Calu3 (cell line): ENCODE measurements at regions of chr5 and their contacts with region 1.

Region 1: GRCh38 chr5:134586866-134587524 is 45.6 kb downstream of the SAR1B start:
- DNase-seq: peak; percentile 97
- H3K4me3 Mint-ChIP-seq: peak overlapping the region; percentile 26
- H3K27ac Mint-ChIP-seq: no peak overlapping the region
- H3K4me1 Mint-ChIP-seq: peaks cover 29% of the 10 kb centered on the region
- H3K27me3 Mint-ChIP-seq: no peaks in the 10 kb centered on the region
- CTCF ChIP-seq: peak; percentile 90

Region 2: DNA sequence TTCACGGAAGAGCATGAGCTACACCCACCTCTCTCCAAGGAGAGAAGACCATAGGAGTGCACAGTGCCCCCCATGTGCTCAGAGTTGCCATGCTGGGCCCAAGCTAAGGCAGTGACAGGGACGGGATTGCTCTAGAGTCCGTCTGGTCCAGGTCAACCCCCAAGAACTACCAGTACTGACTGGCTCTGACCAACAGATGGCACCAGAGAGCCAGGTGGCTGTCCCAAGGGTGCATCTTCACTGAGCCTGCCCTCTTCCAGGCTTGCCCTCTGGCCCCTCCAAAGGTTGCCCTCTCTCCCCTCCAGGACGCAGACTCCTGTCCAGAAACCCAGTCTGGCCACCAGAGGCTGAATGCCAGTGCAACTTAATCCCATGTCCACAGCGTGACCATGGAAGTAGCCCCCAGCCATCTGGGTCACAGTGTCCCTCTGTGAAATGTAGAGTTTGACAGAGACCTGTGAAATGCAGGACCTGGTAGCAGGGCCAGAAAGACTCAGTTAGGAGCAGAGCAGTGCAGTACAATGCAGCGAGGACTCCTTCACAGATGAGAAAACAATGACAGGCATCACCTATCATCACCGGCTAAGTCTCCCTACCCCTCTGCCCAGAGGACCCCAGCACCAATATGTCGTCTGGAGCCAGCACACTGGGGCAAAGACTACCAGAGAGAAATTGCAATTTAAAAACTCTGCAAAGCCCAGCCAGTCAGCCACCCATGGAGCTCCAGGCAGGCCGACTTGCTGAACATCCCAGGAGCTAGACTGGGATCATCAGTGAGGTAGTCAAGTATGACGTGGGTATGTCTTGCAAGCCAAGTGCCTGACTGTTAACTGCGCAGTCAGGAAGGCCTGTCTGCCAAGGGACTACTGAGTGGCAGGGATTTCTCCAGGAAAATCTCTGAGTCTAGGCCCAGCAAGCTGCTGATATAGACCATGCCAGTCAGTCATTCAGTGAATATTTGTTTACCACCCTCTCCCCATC is 402.6 kb before region 1 on chr5:
- CTCF ChIA-PET with region 1: interaction called, 6 read pairs
- intact Hi-C with region 1: loop called (anchors 2 kb)
- DNase-seq: peak; percentile 87
- H3K4me3 Mint-ChIP-seq: no peak overlapping the region
- H3K27ac Mint-ChIP-seq: no peak overlapping the region
- H3K4me1 Mint-ChIP-seq: peaks cover 22% of the 10 kb centered on the region
- H3K27me3 Mint-ChIP-seq: no peaks in the 10 kb centered on the region
- CTCF ChIP-seq: peak; percentile 95

Region 3: DNA sequence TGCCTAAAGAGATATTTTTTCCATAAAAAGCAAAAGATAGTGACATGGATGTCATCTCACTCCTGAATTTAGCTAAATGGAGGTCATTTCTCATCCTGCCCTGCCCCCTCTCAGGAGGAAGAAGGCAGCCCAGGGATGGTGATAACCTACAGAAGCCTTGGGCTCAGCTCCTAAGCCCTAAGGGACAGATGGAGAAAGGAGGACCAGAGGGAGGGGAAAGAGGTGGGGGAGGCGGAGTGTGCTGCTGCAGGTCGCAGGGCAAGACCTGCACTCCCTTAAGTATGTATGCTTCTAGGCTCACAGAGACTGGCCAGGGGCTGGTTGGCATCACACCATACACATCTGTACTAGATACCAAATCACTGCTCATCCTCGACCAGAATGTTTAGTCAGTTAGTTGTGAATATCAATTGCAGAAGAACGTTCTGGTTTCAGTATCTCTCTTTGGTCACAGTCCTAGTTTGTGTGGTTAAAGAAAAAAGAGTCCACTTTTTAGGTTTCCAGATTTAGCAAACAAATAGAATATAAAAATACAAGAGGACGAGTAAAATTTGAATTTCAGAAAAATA is 156.9 kb before region 1 on chr5:
- CTCF ChIA-PET with region 1: no interaction called
- intact Hi-C with region 1: no loop called
- DNase-seq: no peak
- H3K4me3 Mint-ChIP-seq: no peak overlapping the region
- H3K27ac Mint-ChIP-seq: no peak overlapping the region
- H3K4me1 Mint-ChIP-seq: peaks cover 10% of the 10 kb centered on the region
- H3K27me3 Mint-ChIP-seq: no peaks in the 10 kb centered on the region
- CTCF ChIP-seq: no peak

Region 4: GRCh38 chr5:134477462-134478250 is 109.3 kb before region 1 on chr5:
- CTCF ChIA-PET with region 1: no interaction called
- intact Hi-C with region 1: no loop called
- DNase-seq: peak; percentile 34
- H3K4me3 Mint-ChIP-seq: no peak overlapping the region
- H3K27ac Mint-ChIP-seq: no peak overlapping the region
- H3K4me1 Mint-ChIP-seq: no peaks in the 10 kb centered on the region
- H3K27me3 Mint-ChIP-seq: no peaks in the 10 kb centered on the region
- CTCF ChIP-seq: no peak

Region 5: DNA sequence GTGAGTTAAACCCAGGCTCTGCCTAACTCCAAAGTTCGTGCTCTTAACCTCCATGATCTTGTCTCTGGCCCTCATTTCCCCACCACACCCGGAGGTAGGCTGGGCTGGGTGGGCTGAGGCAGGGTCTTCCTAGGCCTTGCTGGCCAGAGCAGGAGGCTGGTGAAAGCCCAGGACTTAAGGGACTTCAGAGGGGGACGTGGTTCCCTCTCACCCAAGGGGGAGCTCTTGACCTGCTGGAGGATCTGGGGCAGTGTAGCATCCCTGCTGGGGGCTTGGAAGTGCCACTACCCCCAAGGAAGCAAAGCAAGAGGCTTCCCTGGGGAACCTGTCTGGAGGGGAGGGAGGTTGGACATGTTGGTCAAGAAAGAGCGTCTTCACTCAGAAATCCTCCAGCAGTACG is 432.3 kb after region 1 on chr5:
- CTCF ChIA-PET with region 1: no interaction called
- intact Hi-C with region 1: no loop called
- DNase-seq: no peak
- H3K4me3 Mint-ChIP-seq: no peak overlapping the region
- H3K27ac Mint-ChIP-seq: no peak overlapping the region
- H3K4me1 Mint-ChIP-seq: no peaks in the 10 kb centered on the region
- H3K27me3 Mint-ChIP-seq: no peaks in the 10 kb centered on the region
- CTCF ChIP-seq: no peak